ENCODE measurements at regions of chr2 and their contacts with region 1.

Region 1: GRCh38 chr2:12151716-12152115 is 405.3 kb downstream of the LPIN1 start:
- DNase-seq: no peak
- H3K4me3 Mint-ChIP-seq: no peak overlapping the region
- H3K27ac Mint-ChIP-seq: no peak overlapping the region
- H3K4me1 Mint-ChIP-seq: no peaks in the 10 kb centered on the region
- H3K27me3 Mint-ChIP-seq: no peaks in the 10 kb centered on the region

Region 2: DNA sequence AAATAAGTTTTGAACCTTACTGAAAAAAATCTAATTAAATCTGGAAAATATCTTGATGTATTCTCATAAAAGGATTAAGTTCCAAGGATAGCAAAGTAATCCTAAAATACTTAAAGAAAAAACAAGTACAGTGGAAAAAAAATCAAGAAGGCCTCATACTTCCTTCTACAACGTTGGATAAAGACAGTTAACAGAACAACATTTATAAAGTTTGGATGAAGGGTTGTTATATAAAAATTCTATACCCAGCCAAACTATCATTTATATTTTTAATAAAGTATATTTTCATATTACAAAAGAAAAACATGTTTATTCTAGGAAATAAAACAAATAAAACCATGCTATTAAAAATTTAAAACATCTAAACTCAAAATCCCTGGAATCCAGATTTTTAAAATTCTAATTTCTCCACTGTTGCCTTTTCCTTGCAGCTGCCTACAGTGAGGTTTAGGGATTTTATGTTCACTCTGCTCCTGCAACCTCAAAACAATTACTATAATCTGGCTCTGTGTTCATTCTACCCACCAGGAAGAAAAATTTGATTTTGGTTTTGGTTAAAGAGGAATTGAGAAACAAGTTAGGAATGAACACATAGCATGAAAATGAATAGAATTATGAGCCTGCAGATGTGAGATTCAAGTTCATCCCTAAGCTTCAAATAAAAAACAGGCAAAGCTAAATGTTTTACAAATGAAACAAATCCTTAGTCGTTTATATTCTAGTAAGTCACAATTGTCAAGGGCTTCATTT is 262.4 kb before region 1 on chr2:
- CTCF ChIA-PET with region 1: no interaction called
- POLR2A ChIA-PET with region 1: interaction called, 13 read pairs
- DNase-seq: no peak
- H3K4me3 Mint-ChIP-seq: no peak overlapping the region
- H3K27ac Mint-ChIP-seq: no peak overlapping the region
- H3K4me1 Mint-ChIP-seq: no peaks in the 10 kb centered on the region
- H3K27me3 Mint-ChIP-seq: peaks cover 4% of the 10 kb centered on the region